HepG2 (cell line): ENCODE measurements at regions of chr1 and their contacts with region 1.

Region 1: GRCh38 chr1:34681480-34682451 is 73.1 kb upstream of the GJB5 start:
- DNase-seq: peak; percentile 37
- ATAC-seq: peak; percentile 88
- H3K4me3 ChIP-seq: no peak overlapping the region
- H3K27ac ChIP-seq: no peak overlapping the region
- H3K4me1 ChIP-seq: peaks cover 14% of the 10 kb centered on the region
- H3K27me3 ChIP-seq: 0 out of 5 replicates have a peak, but pooled peaks cover 0 to 1% of the 10 kb centered on the region in 2 experiments
- CTCF ChIP-seq: peak; percentile 70
- EP300 ChIP-seq: no peak
- POLR2A ChIP-seq: no peak
- RAD21 ChIP-seq: no peak

Region 2: DNA sequence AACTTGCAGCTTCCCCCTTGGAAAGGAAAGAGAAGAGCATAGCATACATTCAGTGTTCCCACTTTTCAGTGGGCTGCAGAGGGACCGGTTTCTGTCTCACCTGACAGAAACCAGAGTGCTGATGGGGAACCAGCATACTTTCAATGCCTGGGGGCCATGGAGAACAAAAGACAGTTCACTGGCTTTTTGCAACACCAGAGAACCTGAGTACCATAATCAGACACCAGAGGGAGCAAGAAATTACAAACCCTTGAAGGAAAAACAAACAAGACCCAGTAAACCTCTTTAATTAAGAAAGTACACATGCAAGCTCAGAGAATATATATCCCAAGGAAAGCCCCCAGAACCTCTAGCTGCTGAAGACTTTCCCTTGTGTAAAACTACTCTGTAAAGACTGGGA is 567.9 kb before region 1 on chr1:
- CTCF ChIA-PET with region 1: no interaction called
- POLR2A ChIA-PET with region 1: no interaction called
- in situ Hi-C with region 1: no loop called
- intact Hi-C with region 1: loop called (anchors 5 kb)
- DNase-seq: peak; percentile 10
- ATAC-seq: no peak
- H3K4me3 ChIP-seq: no peak overlapping the region
- H3K27ac ChIP-seq: no peak overlapping the region
- H3K4me1 ChIP-seq: no peaks in the 10 kb centered on the region
- H3K27me3 ChIP-seq: no peaks in the 10 kb centered on the region
- CTCF ChIP-seq: peak; percentile 22; the same call in 1 of the 2 replicates
- EP300 ChIP-seq: no peak
- POLR2A ChIP-seq: no peak
- RAD21 ChIP-seq: no peak

Region 3: DNA sequence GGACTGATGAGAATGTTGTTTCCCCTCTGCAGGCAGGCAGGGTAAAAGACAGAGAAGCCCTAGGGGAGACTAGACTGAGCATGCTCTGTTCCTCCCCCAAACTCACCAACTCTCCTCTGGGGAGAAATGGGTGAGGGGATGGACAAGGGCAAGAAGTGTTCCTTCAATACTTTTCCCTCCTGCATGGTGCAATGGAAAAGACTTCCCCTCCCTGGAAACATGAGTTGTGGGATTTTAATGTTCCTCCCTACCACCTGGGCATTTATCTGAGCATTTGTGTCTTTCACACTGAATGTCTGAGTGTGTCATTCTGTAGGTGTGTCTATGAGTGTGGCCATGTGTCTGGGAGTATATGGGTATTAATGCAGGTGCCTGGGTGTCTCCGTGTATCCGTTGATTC is 229.3 kb before region 1 on chr1:
- CTCF ChIA-PET with region 1: no interaction called
- POLR2A ChIA-PET with region 1: no interaction called
- in situ Hi-C with region 1: no loop called
- intact Hi-C with region 1: no loop called
- DNase-seq: no peak
- ATAC-seq: no peak
- H3K4me3 ChIP-seq: no peak overlapping the region
- H3K27ac ChIP-seq: no peak overlapping the region
- H3K4me1 ChIP-seq: no peaks in the 10 kb centered on the region
- H3K27me3 ChIP-seq: no peaks in the 10 kb centered on the region
- CTCF ChIP-seq: no peak
- EP300 ChIP-seq: no peak
- POLR2A ChIP-seq: no peak
- RAD21 ChIP-seq: no peak

Region 4: GRCh38 chr1:34549199-34549598 is 132.6 kb before region 1 on chr1:
- CTCF ChIA-PET with region 1: no interaction called
- POLR2A ChIA-PET with region 1: no interaction called
- in situ Hi-C with region 1: no loop called
- intact Hi-C with region 1: loop called (anchors 5 kb)
- DNase-seq: peak; percentile 37
- ATAC-seq: peak; percentile 82
- H3K4me3 ChIP-seq: no peak overlapping the region
- H3K27ac ChIP-seq: no peak overlapping the region
- H3K4me1 ChIP-seq: no peaks in the 10 kb centered on the region
- H3K27me3 ChIP-seq: no peaks in the 10 kb centered on the region
- CTCF ChIP-seq: peak; percentile 53
- EP300 ChIP-seq: no peak
- POLR2A ChIP-seq: no peak
- RAD21 ChIP-seq: no peak